ENCODE measurements at regions of chrX and their contacts with region 1.

Region 1: GRCh38 chrX:70554081-70554480 is 109.4 kb downstream of the DLG3 start:
- DNase-seq: no peak

Region 2: DNA sequence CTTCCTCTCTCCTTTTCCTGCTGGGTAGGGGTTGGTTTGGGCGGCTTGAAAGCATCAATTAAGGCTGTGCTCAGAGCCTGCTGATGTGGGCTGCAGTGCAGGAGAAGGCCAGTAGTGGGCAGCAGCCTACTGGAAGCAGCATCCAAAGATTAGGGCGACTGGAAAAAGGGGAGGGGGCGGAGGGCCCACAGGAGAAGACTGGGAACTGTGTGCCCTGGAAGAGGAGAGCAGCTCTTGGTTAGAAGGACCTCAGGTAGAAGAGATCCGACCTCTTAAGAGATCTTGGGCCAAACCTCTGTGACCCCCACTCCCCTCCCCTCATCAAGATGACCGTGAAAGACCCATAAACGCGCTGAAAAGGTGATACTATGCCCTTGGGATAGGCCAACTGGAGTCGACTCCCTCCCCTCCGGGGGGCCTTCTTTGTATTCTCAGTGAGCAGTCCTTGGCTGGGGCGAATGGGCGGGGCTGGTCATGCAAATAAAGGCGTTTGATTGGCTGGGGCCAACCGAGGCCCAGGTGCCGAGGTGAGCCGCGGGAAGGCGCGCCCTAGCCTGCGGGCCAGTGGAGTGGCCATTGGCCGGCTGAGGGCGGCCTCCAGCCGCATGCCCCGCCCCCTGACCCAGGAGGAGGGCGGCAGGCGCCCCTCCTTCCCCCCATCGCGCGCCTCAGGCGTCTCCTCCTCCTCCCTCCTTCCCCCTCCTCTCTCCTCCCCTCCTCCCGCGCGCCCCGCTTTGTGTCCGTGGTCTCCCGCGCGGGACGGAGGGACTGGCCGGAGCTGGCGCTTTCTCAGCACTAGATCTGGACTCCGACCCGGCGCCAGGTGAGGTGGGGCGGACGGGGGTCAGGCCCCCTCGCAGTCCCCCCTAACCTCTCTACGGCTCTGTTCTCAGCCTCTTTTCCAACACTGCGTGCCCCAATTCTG is 99.4 kb before region 1 on chrX:
- intact Hi-C with region 1: loop called in 1 of 2 experiments (anchors 5 kb)
- DNase-seq: no peak

Measured in posterior vena cava (tissue), 2 donors.